HepG2 (cell line): ENCODE measurements at regions of chr10 and their contacts with region 1.

Region 1: DNA sequence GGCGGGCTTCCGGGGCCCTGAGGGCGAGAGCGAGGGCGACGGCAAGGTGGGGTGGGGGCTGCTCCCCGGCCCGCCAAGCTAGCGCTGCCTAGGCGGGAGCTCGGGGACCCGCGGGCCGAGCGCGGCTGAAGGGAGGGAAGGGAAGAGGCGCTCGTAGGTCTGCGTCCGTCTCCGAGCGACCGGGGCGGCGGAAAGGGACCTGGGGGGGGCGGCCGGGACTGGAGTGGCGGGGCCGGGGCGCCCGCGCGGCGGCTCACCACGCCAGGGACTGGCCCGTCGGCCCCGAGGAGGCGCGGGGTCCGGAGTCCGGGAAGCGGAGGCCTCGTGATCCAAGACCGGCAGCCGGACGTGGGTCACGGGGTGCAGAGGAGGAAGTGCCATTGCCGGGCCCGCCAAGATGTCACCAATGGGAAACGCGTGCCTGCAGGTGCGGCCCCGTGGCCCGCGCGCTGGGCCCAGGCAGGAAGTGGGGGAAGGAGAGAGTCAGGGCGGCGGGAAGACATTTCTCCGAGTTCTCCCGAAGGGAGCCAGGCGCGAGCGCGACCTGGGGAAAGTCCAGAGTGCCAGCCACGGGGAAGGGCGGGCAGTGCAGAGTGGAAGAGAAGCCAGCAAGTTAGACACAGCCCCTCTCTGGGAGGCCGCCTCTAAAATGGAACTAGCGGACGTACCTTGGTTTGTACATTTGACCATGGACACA is 11.9 kb downstream of the HNRNPF start:
- DNase-seq: peak; percentile 92
- ATAC-seq: peak; percentile 81
- H3K4me3 ChIP-seq: peak overlapping the region; percentile 55 to 79 (median 55)
- H3K27ac ChIP-seq: peak overlapping the region; percentile 99
- H3K4me1 ChIP-seq: peaks cover 79% of the 10 kb centered on the region
- H3K27me3 ChIP-seq: no peaks in the 10 kb centered on the region; a peak in 1 of 5 replicates
- CTCF ChIP-seq: no peak
- EP300 ChIP-seq: 0 out of 4 replicates have a peak, but pooled peaks of 1 of the 2 experiments have one; percentile 48
- POLR2A ChIP-seq: peak; percentile 54 to 78
- RAD21 ChIP-seq: no peak; the same call in none of the 2 replicates

Region 2: DNA sequence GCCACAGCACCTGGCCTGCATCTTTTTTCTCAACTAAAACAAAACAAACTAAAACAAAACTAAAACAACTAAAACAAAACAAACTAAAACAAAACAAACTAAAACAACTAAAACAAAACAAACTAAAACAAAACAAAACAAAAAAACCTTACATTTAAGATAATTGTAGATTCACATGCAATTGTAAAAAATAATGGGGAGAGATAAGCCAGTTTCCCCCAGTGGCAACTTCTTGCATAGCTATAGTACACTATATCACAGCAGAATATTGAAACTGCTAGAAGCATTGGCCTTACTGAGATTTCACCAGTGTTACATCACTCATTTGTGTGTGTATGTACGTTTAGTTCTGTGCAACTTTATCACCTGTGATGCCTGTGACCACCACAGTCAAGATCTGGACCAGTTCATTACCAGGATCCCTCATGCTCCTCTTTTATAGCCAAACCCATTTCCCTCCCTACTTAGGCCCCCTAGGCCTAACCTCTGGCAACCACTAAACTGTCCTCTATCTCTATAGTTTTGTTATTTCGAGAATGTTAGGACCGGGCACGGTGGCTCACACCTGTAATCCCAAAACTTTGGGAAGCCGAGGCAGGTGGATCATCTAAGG is 16.4 kb before region 1 on chr10:
- CTCF ChIA-PET with region 1: no interaction called
- POLR2A ChIA-PET with region 1: interaction called, 22 read pairs
- in situ Hi-C with region 1: no loop called
- intact Hi-C with region 1: no loop called
- DNase-seq: no peak
- ATAC-seq: peak; percentile 14
- H3K4me3 ChIP-seq: no peak overlapping the region
- H3K27ac ChIP-seq: no peak overlapping the region
- H3K4me1 ChIP-seq: peaks cover 48% of the 10 kb centered on the region
- H3K27me3 ChIP-seq: 0 out of 5 replicates have a peak, but pooled peaks cover 0 to 2% of the 10 kb centered on the region in 2 experiments
- CTCF ChIP-seq: no peak
- EP300 ChIP-seq: no peak
- POLR2A ChIP-seq: no peak
- RAD21 ChIP-seq: no peak

Region 3: DNA sequence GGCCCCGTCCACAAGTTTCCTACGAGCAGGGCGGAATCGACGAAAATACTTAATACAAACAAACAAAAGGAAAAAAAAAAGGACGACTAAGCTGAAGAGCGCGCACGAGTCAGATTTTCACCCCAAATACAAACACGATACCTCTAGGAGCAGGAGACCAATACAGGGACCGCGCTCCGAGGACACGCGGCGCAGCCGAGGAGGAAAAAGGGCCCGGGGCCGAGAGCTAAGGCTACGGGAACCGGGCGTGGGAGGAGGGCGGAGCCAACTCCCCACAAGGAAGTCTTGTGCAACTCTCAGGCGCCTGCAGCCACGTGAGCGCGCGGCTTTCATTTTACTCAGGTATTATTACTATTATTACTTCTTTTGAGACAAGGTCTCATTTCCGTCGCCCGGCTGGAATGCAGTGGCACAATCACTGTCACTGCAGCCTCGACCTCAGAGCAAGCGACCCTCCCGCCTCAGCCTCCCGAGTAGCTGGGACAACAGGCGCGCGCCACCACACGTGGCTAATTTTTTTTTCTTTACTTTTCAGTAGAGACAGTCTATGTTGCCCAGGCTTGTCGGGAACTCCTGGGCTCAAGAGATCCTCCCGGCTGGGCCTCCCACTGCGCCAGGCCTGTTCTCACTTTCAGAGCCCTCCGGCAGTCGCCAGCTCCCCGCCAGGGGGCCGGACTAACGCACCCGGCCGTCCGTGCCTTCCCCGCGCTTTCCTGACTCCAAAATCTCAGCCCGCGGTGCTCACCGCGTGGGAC is 10.7 kb after region 1 on chr10:
- CTCF ChIA-PET with region 1: no interaction called
- POLR2A ChIA-PET with region 1: interaction called, 51 read pairs
- in situ Hi-C with region 1: no loop called
- intact Hi-C with region 1: loop called (anchors 1 kb)
- DNase-seq: peak; percentile 89
- ATAC-seq: peak; percentile 53
- H3K4me3 ChIP-seq: peak overlapping the region; percentile 86 to 95 (median 87)
- H3K27ac ChIP-seq: peak overlapping the region; percentile 100
- H3K4me1 ChIP-seq: peaks cover 66% of the 10 kb centered on the region
- H3K27me3 ChIP-seq: no peaks in the 10 kb centered on the region; a peak in 1 of 5 replicates
- CTCF ChIP-seq: peak; percentile 59
- EP300 ChIP-seq: no peak; a peak in 1 of 4 replicates
- POLR2A ChIP-seq: peak; percentile 78 to 94
- RAD21 ChIP-seq: peak; percentile 34; the same call in 1 of the 2 replicates

Region 4: GRCh38 chr10:43420369-43421200 is 23.5 kb after region 1 on chr10:
- CTCF ChIA-PET with region 1: no interaction called
- POLR2A ChIA-PET with region 1: interaction called, 39 read pairs
- in situ Hi-C with region 1: no loop called
- intact Hi-C with region 1: loop called (anchors 1 kb)
- DNase-seq: peak; percentile 96
- ATAC-seq: peak; percentile 92
- H3K4me3 ChIP-seq: peak overlapping the region; percentile 27 to 64 (median 47); a peak in 5 of 6 replicates
- H3K27ac ChIP-seq: peak overlapping the region; percentile 99
- H3K4me1 ChIP-seq: peaks cover 70% of the 10 kb centered on the region
- H3K27me3 ChIP-seq: no peaks in the 10 kb centered on the region
- CTCF ChIP-seq: no peak; the same call in none of the 2 replicates
- EP300 ChIP-seq: peak in 1 of 2 experiments; percentile 78; a peak in 3 of 4 replicates
- POLR2A ChIP-seq: peak; percentile 72 to 83
- RAD21 ChIP-seq: peak; percentile 55

Region 5: GRCh38 chr10:43436400-43437140 is 39.5 kb after region 1 on chr10 and contains the start of gene ZNF487:
- CTCF ChIA-PET with region 1: no interaction called
- POLR2A ChIA-PET with region 1: interaction called, 28 read pairs
- in situ Hi-C with region 1: no loop called
- intact Hi-C with region 1: loop called (anchors 5 kb)
- DNase-seq: peak; percentile 80
- ATAC-seq: peak; percentile 96
- H3K4me3 ChIP-seq: peak within 1 kb of the TSS; percentile 63 to 98 (median 87)
- H3K27ac ChIP-seq: peak within 1 kb of the TSS; percentile 100
- H3K4me1 ChIP-seq: peaks cover 29% of the 10 kb centered on the region
- H3K27me3 ChIP-seq: no peaks in the 10 kb centered on the region; a peak in 1 of 5 replicates
- CTCF ChIP-seq: peak; percentile 69
- EP300 ChIP-seq: peak in 1 of 2 experiments; percentile 26; a peak in 1 of 4 replicates
- POLR2A ChIP-seq: peak; percentile 88 to 89
- RAD21 ChIP-seq: peak; percentile 62; the same call in 1 of the 2 replicates
- total RNA-seq, gene ZNF487: 6.1 and 7.4 TPM in 2 replicates